ENCODE measurements at regions of chrX and their contacts with region 1.

Region 1: DNA sequence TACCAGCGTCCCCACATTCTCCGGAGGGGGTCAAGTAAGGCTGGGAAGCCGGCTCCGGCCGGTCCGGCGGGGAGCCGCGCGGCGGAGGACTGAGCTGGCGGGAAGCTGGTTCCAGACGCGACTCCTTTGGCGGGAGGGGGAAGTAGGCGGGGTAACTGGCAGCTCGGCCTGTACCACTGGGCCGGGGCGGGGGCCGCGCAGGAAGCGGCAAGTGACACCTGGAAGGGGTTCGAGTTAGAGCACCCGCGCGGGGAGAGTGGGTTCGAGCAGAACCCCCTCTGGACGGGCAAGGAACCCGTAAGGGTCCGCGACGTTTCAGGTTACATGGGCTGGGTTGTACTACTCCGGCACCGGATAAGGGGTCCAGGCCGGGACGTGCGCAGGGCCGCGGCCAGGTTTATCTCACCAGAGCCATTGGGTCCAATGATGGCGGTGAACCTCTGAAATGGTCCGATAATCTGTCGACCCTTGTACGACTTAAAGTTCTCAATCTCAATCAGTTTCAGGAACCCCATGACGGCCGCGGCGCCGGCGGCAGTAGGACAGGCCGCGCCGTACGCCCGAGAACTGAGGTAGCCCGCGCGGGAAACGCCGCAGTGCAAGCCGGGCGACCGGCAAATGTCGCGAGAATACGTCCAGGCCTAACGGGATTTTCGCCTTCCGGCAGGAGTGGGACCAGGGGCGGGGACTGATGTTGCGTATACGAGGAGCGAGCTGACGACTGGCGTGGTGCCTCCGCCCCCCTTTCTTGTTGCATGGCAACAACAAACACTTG is at the start of gene SMC1A:
- H3K4me3 ChIP-seq: peak within 1 kb of the TSS; percentile 76
- H3K27ac ChIP-seq: peak within 1 kb of the TSS; percentile 99
- H3K4me1 ChIP-seq: peaks cover 6% of the 10 kb centered on the region
- CTCF ChIP-seq: peak; percentile 30; the same call in 1 of the 2 replicates

Region 2: DNA sequence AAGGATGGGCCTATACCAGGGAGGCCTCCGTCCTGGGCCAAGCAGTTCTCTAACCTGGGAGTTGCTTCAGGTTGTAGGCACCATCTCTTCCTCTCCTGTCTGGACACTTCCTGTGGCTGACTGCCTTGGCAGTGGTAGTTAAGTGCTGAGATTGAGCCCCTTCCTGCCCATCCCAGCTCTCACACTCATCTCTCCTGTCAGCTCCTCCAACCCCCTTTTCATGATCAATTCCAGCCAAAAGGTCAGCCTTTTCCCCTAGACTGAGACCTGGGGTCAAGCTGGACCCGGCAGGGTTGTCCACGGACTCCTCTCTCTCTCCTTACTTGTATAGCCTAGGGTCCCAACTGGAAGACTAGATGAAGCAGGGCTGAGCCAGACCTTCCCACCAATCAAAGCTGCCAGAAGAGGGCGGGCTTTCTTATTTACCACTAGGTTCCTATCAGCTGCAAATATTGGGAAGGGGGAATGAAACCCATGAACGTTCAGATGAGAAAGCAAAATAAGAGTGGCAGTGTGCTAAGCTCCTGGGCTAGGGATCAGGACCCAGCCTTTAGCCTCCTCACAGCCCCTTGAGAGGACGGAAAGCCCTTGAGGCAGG is 231.8 kb before region 1 on chrX:
- CTCF ChIA-PET with region 1: no interaction called
- POLR2A ChIA-PET with region 1: no interaction called
- H3K4me3 ChIP-seq: no peak overlapping the region
- H3K27ac ChIP-seq: no peak overlapping the region
- H3K4me1 ChIP-seq: no peaks in the 10 kb centered on the region
- CTCF ChIP-seq: no peak

Region 3: GRCh38 chrX:53224860-53225797 is 197.1 kb before region 1 on chrX and contains the start of gene KDM5C:
- CTCF ChIA-PET with region 1: interaction called, 3 read pairs
- POLR2A ChIA-PET with region 1: interaction called, 21 read pairs
- H3K4me3 ChIP-seq: peak within 1 kb of the TSS; percentile 90
- H3K27ac ChIP-seq: peak within 1 kb of the TSS; percentile 96
- H3K4me1 ChIP-seq: peaks cover 19% of the 10 kb centered on the region
- CTCF ChIP-seq: peak; percentile 55; the same call in 1 of the 2 replicates

Region 4: DNA sequence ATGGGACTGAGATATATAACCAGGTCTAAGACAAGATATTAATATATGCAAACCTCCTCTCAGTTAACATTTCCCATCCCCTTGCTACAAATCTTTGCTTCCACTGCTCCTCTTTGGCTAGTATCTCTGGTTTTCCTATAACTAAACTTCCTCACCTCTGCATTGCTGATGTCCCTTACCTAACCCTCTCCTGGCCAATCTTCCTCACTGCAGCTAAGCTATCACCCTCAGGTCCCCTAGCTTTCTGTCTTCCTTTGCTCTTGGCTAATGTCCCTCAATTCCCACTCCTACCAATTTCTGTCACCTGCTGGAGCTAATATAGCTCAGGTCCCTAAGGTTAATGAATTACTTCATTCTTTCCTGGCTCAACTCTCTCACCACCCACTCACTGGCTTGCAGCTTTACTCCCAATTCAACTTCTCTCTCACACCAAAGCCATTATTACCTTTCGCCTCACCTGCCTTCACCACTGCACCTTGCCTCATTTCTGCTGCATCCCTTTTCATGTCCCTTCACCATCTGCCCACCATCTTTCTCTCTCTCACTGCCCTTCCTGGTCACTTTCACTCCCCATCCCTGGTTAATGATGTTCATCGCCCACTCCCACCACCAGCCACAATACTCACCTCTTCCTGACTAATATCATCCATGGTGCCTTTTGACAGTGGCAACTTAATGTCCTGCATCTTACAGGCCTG is 26.5 kb before region 1 on chrX:
- CTCF ChIA-PET with region 1: no interaction called
- POLR2A ChIA-PET with region 1: interaction called, 19 read pairs
- H3K4me3 ChIP-seq: no peak overlapping the region
- H3K27ac ChIP-seq: no peak overlapping the region; the same call in 1 of the 2 replicates
- H3K4me1 ChIP-seq: no peaks in the 10 kb centered on the region
- CTCF ChIP-seq: 0 out of 2 replicates have a peak, but pooled peaks have one; percentile 18

Region 5: GRCh38 chrX:53433651-53434639 is 11.7 kb after region 1 on chrX and contains the start of gene HSD17B10:
- CTCF ChIA-PET with region 1: interaction called, 87 read pairs
- POLR2A ChIA-PET with region 1: interaction called, 35 read pairs
- H3K4me3 ChIP-seq: peak within 1 kb of the TSS; percentile 63
- H3K27ac ChIP-seq: peak within 1 kb of the TSS; percentile 38; the same call in 1 of the 2 replicates
- H3K4me1 ChIP-seq: no peaks in the 10 kb centered on the region
- CTCF ChIP-seq: no peak

Region 6: GRCh38 chrX:53481816-53482465 is 59.7 kb after region 1 on chrX:
- CTCF ChIA-PET with region 1: interaction called, 11 read pairs
- POLR2A ChIA-PET with region 1: no interaction called
- H3K4me3 ChIP-seq: no peak overlapping the region
- H3K27ac ChIP-seq: no peak overlapping the region
- H3K4me1 ChIP-seq: no peaks in the 10 kb centered on the region
- CTCF ChIP-seq: peak; percentile 36; the same call in 1 of the 2 replicates

Measured in HEK293 (cell line).